Activated CD4-positive, alpha-beta memory T cell treated with anti-CD3 and anti-CD28 coated beads, Interleukin-2, amount 10 ng/mL, durations not matched to agents 7 days and 5 days (primary cell): ENCODE measurements at regions of chr5 and their contacts with region 1.

Region 1: DNA sequence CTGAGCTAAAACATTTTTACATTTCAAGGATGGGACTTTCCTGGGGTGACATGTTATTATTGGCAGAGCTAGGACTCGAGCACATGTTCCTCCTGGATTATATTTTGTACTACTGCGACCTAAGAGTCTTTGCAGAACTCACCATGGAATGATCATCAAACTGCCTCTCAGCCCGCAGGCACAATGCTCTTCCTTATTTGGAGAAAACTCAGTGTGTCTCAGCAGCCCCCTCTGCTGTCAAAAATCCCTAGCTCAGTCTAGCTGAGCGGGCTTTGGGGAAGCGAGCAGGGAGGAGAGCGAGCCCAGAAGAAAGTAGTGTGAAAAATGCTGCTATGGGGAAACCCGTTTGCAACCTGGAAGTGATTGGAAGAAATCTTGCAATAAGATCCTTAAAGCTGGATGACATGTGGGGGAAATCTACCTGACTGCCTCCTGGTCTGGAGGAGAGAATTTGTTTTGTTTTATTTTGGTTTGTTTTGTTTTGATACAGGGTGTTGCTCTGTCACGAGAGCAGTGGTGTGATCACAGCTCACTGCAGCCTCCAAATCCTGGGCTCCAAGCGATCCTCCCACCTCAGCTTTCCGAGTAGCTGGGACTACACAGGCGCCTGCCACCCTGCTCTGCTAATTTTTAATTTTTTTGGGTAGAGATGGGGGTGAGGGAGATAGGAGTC is 89.9 kb upstream of the CLINT1 start:
- DNase-seq: peak; percentile 80
- H3K4me3 Mint-ChIP-seq: no peak overlapping the region
- H3K27ac Mint-ChIP-seq: no peak overlapping the region
- H3K4me1 Mint-ChIP-seq: peaks cover 5% of the 10 kb centered on the region
- H3K27me3 Mint-ChIP-seq: peaks cover 16% of the 10 kb centered on the region

Region 2: GRCh38 chr5:157812086-157812485 is 136.8 kb before region 1 on chr5:
- CTCF ChIA-PET with region 1: interaction called, 87 read pairs
- POLR2A ChIA-PET with region 1: no interaction called
- DNase-seq: no peak
- H3K4me3 Mint-ChIP-seq: no peak overlapping the region
- H3K27ac Mint-ChIP-seq: no peak overlapping the region
- H3K4me1 Mint-ChIP-seq: no peaks in the 10 kb centered on the region
- H3K27me3 Mint-ChIP-seq: no peaks in the 10 kb centered on the region

Region 3: DNA sequence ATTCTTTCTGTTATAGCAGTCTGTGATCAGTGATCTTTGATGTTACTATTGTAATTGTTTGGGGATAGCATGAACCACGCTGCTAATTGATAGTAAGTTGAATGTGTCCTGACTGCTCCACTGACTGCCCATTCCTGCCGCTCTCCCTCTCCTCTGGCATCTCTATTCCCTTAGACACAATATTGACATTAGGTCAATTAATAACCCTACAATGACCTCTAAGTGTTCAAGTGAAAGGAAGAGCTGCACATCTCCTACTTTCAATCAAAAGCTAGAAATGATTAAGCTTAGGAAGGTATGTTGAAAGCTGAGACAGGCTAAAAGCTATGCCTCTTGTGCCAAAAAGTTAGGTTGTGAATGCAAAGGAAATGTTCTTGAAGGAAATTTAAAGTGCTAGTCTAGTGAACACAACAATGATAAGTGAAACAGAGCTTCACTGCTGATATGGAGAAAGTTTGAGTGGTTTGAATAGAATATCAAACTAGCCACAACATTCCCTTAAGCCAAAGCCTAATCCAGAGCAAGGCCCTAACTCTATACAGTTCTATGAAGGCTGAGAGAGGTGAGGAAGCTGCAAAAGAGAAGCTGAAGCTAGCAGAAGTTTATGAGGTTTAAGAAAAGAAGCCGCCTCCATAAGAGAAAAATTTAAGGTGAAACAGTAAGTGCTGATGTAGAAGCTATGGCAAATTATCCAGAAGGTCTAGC is 102.8 kb before region 1 on chr5:
- CTCF ChIA-PET with region 1: interaction called, 10 read pairs
- POLR2A ChIA-PET with region 1: interaction called, 3 read pairs
- DNase-seq: no peak
- H3K4me3 Mint-ChIP-seq: no peak overlapping the region
- H3K27ac Mint-ChIP-seq: no peak overlapping the region
- H3K4me1 Mint-ChIP-seq: peaks cover 7% of the 10 kb centered on the region
- H3K27me3 Mint-ChIP-seq: no peaks in the 10 kb centered on the region

Region 4: DNA sequence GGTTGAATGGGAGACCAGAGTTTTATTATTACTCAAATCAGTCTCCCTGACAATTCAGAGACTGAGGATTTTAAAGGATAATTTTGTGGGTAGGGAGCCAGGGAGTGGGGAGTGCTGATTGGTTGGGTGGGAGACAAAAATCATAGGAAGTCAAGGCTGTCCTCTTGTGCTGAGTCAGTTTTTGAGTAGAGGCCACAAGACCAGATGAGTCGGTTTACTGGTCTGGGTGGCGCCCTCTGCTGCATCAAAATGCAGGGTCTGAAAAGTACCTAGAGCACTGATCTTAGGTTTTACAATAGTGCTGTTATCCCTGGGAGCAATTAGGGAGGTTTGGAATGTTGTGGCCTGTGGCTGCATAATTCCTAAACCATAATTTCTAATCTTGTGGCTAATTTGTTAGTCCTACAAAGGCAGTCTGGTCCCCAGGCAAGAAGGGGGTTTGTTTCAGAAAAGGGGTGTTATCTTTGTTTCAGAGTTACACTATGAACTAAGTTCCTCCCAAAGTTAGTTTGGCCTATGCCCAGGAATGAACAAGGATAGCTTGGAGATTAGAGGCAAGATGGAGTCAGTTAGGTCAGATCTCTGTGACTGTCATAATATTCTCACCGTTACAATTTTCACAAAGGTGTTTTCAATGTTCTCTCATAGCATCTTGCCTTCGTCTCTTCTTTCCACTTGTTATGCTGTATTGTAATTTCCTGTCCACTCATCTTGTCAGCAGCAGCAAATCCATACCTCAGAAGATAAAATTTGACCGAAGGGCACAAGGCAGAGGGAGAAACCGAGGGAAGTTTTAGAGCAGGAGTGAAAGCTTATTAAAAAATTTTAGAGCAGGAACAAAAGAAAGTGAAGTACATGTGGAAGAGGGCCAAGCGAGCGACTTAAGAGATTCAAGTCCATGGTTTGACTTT is 30.7 kb before region 1 on chr5:
- CTCF ChIA-PET with region 1: interaction called, 24 read pairs
- POLR2A ChIA-PET with region 1: no interaction called
- DNase-seq: peak; percentile 74
- H3K4me3 Mint-ChIP-seq: no peak overlapping the region
- H3K27ac Mint-ChIP-seq: peak overlapping the region; percentile 88
- H3K4me1 Mint-ChIP-seq: peaks cover 31% of the 10 kb centered on the region
- H3K27me3 Mint-ChIP-seq: no peaks in the 10 kb centered on the region

Region 5: DNA sequence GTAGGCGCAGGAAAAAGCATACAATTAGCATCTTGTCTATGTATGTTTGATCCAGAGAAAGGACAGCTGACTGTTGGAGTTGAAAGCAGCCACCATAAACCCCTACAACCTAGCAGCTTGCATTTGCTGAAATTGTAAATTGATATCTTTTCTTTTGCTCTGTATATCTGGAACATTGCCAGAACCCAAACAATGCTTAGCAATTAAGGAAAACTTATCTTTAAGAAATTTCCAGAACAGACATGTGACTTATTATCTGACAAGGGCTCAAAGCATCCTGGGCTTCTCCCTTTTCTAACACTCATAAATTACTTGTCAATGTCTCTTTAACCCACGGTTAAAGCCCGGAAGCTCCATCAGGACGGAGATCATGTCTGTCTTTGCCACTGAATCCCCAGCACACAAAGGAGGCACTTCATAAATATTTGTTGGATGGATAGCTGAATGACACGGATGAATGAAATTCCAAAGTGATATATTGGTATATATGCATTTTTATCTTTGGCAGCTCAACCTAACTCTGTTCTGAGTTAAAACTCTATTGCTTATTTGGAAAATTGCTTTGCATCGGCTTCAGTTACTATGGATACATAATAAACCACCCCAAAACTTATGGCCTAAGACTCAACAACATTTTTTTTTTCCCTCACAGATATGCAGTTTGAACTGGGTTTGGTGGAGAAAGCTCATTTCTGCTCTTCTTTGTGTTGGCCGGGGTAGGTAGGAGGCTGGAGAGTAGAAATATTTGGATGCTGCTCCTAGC is 13.1 kb after region 1 on chr5:
- CTCF ChIA-PET with region 1: interaction called, 12 read pairs
- POLR2A ChIA-PET with region 1: no interaction called
- DNase-seq: no peak
- H3K4me3 Mint-ChIP-seq: no peak overlapping the region
- H3K27ac Mint-ChIP-seq: no peak overlapping the region
- H3K4me1 Mint-ChIP-seq: no peaks in the 10 kb centered on the region
- H3K27me3 Mint-ChIP-seq: peaks cover 13% of the 10 kb centered on the region

Region 6: DNA sequence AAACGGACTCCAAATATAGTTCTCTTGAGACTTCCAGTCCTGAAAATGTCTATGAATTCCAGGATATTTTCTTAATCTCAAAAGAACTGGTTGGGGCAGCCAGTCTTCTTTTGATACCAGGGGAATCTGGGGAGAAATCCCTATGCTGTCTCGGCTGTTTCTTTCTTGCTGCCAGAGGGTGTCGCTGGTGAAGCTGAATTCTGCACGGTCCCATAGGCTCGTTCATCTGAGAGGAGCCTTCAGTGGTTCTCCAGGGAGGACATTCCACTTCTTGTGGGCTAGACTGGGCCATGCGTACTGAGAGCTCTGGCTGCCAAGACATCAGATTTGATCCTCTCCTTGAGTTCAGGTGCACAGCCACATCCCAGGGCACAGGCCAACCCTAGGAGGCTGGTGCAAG is 65.1 kb after region 1 on chr5:
- CTCF ChIA-PET with region 1: no interaction called
- POLR2A ChIA-PET with region 1: no interaction called
- DNase-seq: no peak
- H3K4me3 Mint-ChIP-seq: no peak overlapping the region
- H3K27ac Mint-ChIP-seq: no peak overlapping the region
- H3K4me1 Mint-ChIP-seq: no peaks in the 10 kb centered on the region
- H3K27me3 Mint-ChIP-seq: peaks cover 20% of the 10 kb centered on the region